ENCODE measurements at regions of chr3 and their contacts with region 1.

Region 1: DNA sequence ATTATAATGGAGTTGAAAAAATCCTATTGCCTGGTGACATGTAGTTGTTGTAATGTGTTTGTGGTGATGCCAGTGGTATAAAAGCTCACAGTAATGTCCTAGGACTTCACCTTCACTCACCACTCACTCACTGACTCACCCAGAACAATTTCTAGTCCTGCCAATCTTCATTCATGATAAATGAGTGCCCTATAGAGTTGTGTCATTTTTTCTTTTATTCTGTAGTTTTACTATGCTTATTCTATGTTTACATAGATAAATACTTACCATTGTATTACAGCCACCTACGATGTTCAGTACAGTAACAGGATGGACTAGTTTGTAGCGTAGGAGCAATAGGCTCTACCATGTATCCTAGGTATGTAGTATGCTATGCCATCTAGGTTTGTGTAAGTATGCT is 88.5 kb upstream of the LRRFIP2 start:
- DNase-seq: no peak
- H3K4me3 Mint-ChIP-seq: no peak overlapping the region
- H3K27ac Mint-ChIP-seq: no peak overlapping the region
- H3K4me1 Mint-ChIP-seq: peaks cover 36% of the 10 kb centered on the region
- H3K27me3 Mint-ChIP-seq: no peaks in the 10 kb centered on the region

Region 2: DNA sequence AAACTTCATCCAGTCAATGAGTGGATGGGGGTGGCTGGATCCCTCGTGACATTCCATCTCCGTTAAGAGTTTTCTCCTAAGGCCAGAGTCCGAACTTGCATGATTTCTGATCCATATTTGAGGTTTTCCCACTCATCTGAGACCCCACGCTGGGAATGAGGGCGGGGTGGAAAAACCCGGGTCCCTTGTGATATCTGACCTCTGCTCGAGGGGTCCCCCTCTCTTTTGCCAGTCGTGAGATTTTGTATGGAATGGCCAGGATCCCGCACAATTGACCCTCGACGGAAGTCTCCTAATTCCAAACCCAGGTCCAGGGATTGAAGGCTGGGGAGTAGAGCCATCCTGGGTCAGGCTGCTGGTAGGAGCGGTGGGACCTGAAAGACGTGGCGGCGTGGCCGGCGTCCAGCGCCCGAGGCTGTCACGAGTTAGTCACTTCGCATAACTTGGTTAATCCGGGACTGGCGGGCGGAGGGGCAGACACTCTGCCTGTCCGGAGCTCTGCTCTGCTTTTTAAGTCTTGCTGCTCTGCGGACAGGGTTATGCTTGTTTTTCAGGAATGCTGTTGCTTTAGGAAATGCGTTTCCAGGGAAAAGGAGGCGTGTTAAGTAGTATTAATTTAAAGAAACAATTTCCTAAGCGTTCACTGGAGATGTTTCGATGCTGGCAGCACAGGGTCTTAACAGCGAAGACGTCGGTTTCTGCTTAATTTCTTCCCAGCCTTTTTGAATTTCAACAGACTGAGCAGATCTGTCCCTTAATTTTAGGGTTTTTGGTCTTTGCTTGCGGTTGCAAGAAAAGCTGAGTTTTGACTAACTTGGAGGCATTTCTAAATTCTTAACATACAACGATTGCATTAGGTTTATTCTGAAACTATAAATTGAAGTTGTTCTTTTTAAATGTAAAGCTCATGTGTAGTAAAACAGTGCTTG is 18.8 kb before region 1 on chr3:
- CTCF ChIA-PET with region 1: no interaction called
- POLR2A ChIA-PET with region 1: no interaction called
- intact Hi-C with region 1: loop called (anchors 2 kb)
- DNase-seq: peak; percentile 68
- H3K4me3 Mint-ChIP-seq: peak overlapping the region; percentile 98
- H3K27ac Mint-ChIP-seq: peak overlapping the region; percentile 97
- H3K4me1 Mint-ChIP-seq: peaks cover 50% of the 10 kb centered on the region
- H3K27me3 Mint-ChIP-seq: no peaks in the 10 kb centered on the region

Measured in activated CD4-positive, alpha-beta memory T cell treated with anti-CD3 and anti-CD28 coated beads for 36 hours (primary cell).